ENCODE measurements at regions of chr9 and their contacts with region 1.

Region 1: GRCh38 chr9:128677794-128678193 is 11.2 kb upstream of the SET start:
- DNase-seq: peak in 2 of 4 experiments; percentile 10 to 19
- ATAC-seq: peak; percentile 20; the same call in 2 of the 3 replicates
- H3K4me3 ChIP-seq: no peak overlapping the region
- H3K27ac ChIP-seq: no peak overlapping the region
- H3K4me1 ChIP-seq: peaks cover 2 to 11% of the 10 kb centered on the region in 2 experiments; a peak in 2 of 5 replicates
- H3K27me3 ChIP-seq: no peaks in the 10 kb centered on the region
- CTCF ChIP-seq: no peak
- EP300 ChIP-seq: no peak
- POLR2A ChIP-seq: no peak
- RAD21 ChIP-seq: no peak

Region 2: GRCh38 chr9:128341435-128341849 is 336.4 kb before region 1 on chr9:
- CTCF ChIA-PET with region 1: no interaction called
- POLR2A ChIA-PET with region 1: no interaction called
- in situ Hi-C with region 1: no loop called
- intact Hi-C with region 1: no loop called
- DNase-seq: peak; percentile 85 to 95 (median 88)
- ATAC-seq: peak; percentile 83
- H3K4me3 ChIP-seq: peak overlapping the region; percentile 52
- H3K27ac ChIP-seq: peak overlapping the region; percentile 62; the same call in 1 of the 3 replicates
- H3K4me1 ChIP-seq: peaks cover 10 to 17% of the 10 kb centered on the region in 2 experiments; a peak in 4 of 5 replicates
- H3K27me3 ChIP-seq: no peaks in the 10 kb centered on the region
- CTCF ChIP-seq: peak; percentile 94 to 96 (median 94)
- EP300 ChIP-seq: peak; percentile 44
- POLR2A ChIP-seq: no peak
- RAD21 ChIP-seq: peak; percentile 84 to 96

Region 3: DNA sequence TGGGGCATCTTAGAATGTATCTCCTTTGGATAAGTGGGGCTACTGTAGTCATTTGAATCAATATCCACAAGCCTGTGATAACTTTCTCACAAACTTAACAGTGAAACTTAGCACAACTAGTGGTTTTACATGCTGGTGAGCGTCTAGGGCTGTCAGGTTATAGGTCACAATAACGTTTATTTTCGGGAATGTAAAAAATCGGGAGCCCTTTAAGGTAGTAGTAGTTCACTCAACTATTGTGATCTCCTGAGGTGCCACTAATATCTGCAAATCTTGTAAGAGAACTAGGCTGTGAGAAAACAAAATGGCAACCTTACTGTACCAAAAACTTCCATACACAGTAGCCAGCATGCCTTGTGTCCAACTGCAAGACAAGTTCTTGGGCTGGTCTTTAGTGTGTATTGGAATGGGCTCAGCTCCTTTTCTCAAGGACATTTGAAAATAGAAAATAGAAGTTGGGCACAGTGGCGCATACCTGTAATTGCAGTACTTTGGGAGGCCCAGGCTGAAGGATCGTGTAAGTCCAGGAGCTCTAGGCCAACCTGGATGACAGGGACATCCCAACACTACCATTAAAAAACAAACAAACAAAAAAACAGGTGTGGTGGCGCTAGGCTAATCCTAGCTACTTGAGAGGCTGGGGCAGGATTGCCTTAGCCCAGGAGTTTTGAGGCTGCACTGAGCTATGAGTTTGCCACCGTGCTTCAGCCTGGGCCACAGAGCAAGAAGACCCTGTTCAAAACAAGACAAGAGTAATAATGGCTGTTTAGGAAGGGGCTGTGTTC is 19.3 kb after region 1 on chr9:
- CTCF ChIA-PET with region 1: no interaction called
- POLR2A ChIA-PET with region 1: interaction called, 11 read pairs
- in situ Hi-C with region 1: no loop called
- intact Hi-C with region 1: no loop called
- DNase-seq: no peak
- ATAC-seq: peak; percentile 49
- H3K4me3 ChIP-seq: no peak overlapping the region
- H3K27ac ChIP-seq: peak overlapping the region; percentile 33; the same call in 1 of the 3 replicates
- H3K4me1 ChIP-seq: peaks cover 0 to 5% of the 10 kb centered on the region in 2 experiments; a peak in 2 of 5 replicates
- H3K27me3 ChIP-seq: no peaks in the 10 kb centered on the region
- CTCF ChIP-seq: no peak
- EP300 ChIP-seq: no peak
- POLR2A ChIP-seq: peak; percentile 73
- RAD21 ChIP-seq: no peak

Measured in K562 (cell line).